ENCODE measurements at regions of chr1 and their contacts with region 1.

Region 1: GRCh38 chr1:114346480-114347029 is 164.4 kb downstream of the TRIM33 start:
- DNase-seq: peak in 1 of 2 donors; percentile 94
- H3K4me3 ChIP-seq: peak overlapping the region; percentile 44 to 55
- H3K27ac ChIP-seq: peak overlapping the region; percentile 82
- H3K4me1 ChIP-seq: peaks cover 4% of the 10 kb centered on the region
- H3K27me3 ChIP-seq: no peaks in the 10 kb centered on the region
- CTCF ChIP-seq: peak; percentile 99 to 100 (median 99)
- POLR2A ChIP-seq: no peak

Region 2: GRCh38 chr1:114234408-114235124 is 112.0 kb before region 1 on chr1:
- intact Hi-C with region 1: no loop called
- DNase-seq: peak; percentile 31 to 70
- H3K4me3 ChIP-seq: no peak overlapping the region
- H3K27ac ChIP-seq: no peak overlapping the region
- H3K4me1 ChIP-seq: no peaks in the 10 kb centered on the region
- H3K27me3 ChIP-seq: no peaks in the 10 kb centered on the region
- CTCF ChIP-seq: no peak
- POLR2A ChIP-seq: no peak

Region 3: GRCh38 chr1:114330451-114330983 is 16.0 kb before region 1 on chr1:
- intact Hi-C with region 1: no loop called
- DNase-seq: peak in 1 of 2 donors; percentile 64
- H3K4me3 ChIP-seq: no peak overlapping the region
- H3K27ac ChIP-seq: no peak overlapping the region
- H3K4me1 ChIP-seq: no peaks in the 10 kb centered on the region
- H3K27me3 ChIP-seq: no peaks in the 10 kb centered on the region
- CTCF ChIP-seq: no peak
- POLR2A ChIP-seq: no peak

Region 4: DNA sequence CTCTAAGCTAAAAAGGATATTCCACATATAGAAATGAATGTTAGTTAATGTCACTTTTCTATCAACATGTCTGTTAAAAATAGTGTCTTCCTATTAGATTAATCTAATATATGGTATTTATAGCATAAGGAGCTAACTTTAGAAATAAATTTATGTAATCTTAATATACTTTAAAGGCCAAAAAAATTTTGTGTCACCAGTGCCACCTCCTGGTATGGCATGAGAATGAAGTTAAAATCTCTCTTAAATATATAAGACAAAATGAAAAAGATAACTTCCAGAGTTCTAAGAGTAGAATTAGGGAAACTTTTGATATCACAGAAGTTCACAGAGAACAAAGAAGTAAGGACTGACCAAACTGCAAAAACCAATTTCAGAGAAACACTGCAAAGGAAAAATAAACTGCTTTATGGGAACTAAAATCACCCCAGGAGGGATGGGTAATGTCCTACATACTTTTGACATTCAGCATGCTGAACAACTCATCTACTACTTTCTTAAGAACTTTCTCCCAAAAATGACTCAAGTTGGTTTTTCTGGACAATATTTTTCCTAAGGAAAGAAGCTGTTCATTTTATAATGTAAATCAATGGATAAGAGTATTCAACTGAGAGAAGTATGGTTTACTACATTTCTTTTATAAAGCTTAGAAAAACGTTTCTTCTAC is 81.7 kb after region 1 on chr1:
- intact Hi-C with region 1: loop called (anchors 10 kb)
- DNase-seq: no peak
- H3K4me3 ChIP-seq: no peak overlapping the region
- H3K27ac ChIP-seq: no peak overlapping the region
- H3K4me1 ChIP-seq: no peaks in the 10 kb centered on the region
- H3K27me3 ChIP-seq: no peaks in the 10 kb centered on the region
- CTCF ChIP-seq: peak in 1 of 3 experiments; percentile 7
- POLR2A ChIP-seq: no peak